Psoas muscle (tissue), 8 donors: ENCODE measurements at regions of chr16 and their contacts with region 1.

Region 1: DNA sequence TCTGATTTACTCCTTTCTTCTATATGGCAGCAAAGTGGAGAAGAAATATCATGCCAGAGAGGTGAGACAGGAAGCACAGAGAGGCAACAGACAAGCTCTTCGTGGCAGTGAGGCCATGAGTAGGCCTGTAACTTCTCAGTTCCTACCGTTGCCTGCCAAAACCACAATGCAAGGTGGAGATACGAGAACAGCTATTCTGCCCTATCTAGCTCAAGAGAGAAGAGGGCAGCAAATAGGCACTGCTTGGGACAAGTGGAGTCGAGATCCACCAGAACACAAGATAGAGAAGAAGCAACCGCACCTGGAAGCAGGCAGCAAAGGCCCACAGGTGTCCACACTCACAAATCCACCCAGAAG is 24.8 kb downstream of the RANBP10 start:
- DNase-seq: no peak
- ATAC-seq: peak in 1 of 4 donors; percentile 30
- H3K4me3 ChIP-seq: no peak overlapping the region
- H3K27ac ChIP-seq: peak overlapping the region; percentile 39
- H3K4me1 ChIP-seq: peaks cover 24% of the 10 kb centered on the region
- H3K27me3 ChIP-seq: no peaks in the 10 kb centered on the region
- CTCF ChIP-seq: no peak

Region 2: GRCh38 chr16:67708368-67708861 is 73.1 kb before region 1 on chr16:
- intact Hi-C with region 1: no loop called
- DNase-seq: peak; percentile 33 to 66
- ATAC-seq: peak; percentile 86 to 96 (median 94)
- H3K4me3 ChIP-seq: no peak overlapping the region
- H3K27ac ChIP-seq: peak overlapping the region; percentile 81
- H3K4me1 ChIP-seq: peaks cover 43% of the 10 kb centered on the region
- H3K27me3 ChIP-seq: no peaks in the 10 kb centered on the region
- CTCF ChIP-seq: no peak

Region 3: DNA sequence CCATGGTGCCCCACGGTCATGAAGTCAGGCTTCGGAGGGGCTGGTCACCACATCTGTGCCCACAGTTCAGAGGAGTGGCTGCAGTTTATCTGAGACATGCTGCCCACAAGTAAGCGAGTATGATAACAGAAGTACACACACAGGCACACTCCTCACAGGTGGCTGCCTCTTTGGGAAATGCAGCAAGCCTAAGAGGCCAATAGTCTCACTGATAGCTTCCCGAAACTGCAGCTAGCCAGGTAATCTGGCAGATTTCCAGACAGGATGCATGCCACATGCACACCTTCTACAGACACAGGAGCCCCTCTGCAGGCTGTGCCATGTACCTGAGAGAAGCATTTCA is 49.8 kb before region 1 on chr16:
- intact Hi-C with region 1: loop called in 1 of 2 experiments (anchors 5 kb)
- DNase-seq: no peak
- ATAC-seq: no peak
- H3K4me3 ChIP-seq: no peak overlapping the region
- H3K27ac ChIP-seq: no peak overlapping the region
- H3K4me1 ChIP-seq: no peaks in the 10 kb centered on the region
- H3K27me3 ChIP-seq: no peaks in the 10 kb centered on the region
- CTCF ChIP-seq: no peak

Region 4: GRCh38 chr16:67749436-67750078 is 32.0 kb before region 1 on chr16:
- intact Hi-C with region 1: loop called in 1 of 2 experiments (anchors 5 kb)
- DNase-seq: no peak
- ATAC-seq: peak in 2 of 4 donors; percentile 7 to 10
- H3K4me3 ChIP-seq: no peak overlapping the region
- H3K27ac ChIP-seq: no peak overlapping the region
- H3K4me1 ChIP-seq: peaks cover 4% of the 10 kb centered on the region
- H3K27me3 ChIP-seq: no peaks in the 10 kb centered on the region
- CTCF ChIP-seq: no peak